ENCODE measurements at regions of chr9 and their contacts with region 1.

Region 1: GRCh38 chr9:120868676-120869359 is 8.2 kb downstream of the PHF19 start:
- DNase-seq: peak; percentile 97
- H3K4me3 Mint-ChIP-seq: peak overlapping the region; percentile 80
- H3K27ac Mint-ChIP-seq: peak overlapping the region; percentile 95
- H3K4me1 Mint-ChIP-seq: peaks cover 65% of the 10 kb centered on the region
- H3K27me3 Mint-ChIP-seq: no peaks in the 10 kb centered on the region

Region 2: DNA sequence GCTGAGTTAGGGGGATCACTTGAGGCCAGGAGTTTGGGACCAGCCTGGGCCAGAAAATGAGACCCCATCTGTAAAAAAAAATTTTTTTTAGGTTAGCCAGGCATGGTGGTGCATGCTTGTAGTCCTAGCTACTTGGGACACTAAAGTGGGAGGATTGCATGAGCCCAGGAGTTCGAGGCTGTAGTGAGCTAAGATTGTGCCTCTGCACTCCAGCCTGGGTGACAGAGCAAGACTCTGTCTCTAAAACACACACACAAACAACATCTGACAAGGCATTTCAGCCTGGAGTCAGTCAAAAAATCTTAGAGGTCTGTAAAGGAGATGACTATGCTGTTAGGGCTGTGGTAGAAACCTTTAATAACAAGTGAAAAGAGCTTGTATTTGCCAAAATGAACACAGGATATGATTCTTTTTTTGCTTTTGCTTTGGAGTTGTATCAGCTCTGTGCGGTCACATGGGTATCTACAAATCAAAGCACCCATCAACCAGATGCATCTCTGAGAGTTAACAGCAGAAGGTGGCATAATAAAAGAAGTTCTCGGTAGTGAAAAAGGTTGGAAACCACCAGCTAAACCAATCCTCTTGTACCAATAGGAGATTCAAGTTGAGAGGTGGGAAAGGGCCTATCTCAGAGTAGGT is 22.4 kb before region 1 on chr9:
- CTCF ChIA-PET with region 1: interaction called, 10 read pairs
- DNase-seq: peak; percentile 54
- H3K4me3 Mint-ChIP-seq: peak overlapping the region; percentile 9
- H3K27ac Mint-ChIP-seq: peak overlapping the region; percentile 98
- H3K4me1 Mint-ChIP-seq: peaks cover 66% of the 10 kb centered on the region
- H3K27me3 Mint-ChIP-seq: no peaks in the 10 kb centered on the region

Region 3: DNA sequence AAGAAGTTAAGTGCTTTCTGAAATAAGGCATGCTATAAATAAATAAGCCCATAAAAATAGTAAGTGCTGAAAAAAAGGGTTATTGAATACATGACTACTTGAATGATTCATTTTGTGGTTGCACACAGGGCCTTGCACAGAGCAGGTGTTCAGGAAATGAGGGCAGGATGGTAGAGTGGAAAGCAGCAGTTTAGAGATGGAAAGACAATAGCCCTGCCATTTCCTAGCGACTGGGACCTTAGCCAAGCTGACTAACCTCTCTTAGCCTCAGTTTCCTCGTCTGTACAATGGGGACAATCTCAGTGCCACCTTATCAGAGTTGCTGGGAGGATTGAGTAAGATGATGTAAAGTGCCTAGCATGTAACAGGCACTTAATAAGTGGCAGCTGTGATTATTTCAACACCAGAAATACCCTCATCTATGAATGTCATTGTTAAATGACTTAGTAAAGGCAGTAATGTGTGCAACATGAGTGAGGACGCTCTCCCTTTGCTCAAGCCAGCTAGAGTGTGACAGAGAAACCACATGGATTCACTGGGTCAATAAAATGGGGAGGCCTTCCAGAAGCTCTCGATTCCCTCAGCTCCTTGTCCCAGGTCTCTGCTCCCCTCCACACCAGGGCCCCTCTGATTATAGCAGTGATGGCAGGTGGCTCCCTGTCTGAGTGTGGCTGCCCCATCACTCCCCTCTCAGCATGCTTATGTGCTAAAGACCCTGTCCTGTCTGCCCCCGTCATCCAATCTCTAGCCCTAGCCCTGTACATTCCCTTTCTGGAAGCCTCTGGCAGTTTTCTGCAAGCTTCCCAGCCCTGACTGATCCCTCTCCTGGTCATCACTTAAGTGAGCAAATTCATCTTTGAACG is 24.2 kb after region 1 on chr9:
- CTCF ChIA-PET with region 1: interaction called, 25 read pairs
- DNase-seq: peak; percentile 74
- H3K4me3 Mint-ChIP-seq: peak overlapping the region; percentile 72
- H3K27ac Mint-ChIP-seq: peak overlapping the region; percentile 99
- H3K4me1 Mint-ChIP-seq: peaks cover 93% of the 10 kb centered on the region
- H3K27me3 Mint-ChIP-seq: no peaks in the 10 kb centered on the region

Region 4: GRCh38 chr9:120916588-120916987 is 47.8 kb after region 1 on chr9:
- CTCF ChIA-PET with region 1: interaction called, 10 read pairs
- DNase-seq: no peak
- H3K4me3 Mint-ChIP-seq: peak overlapping the region; percentile 40
- H3K27ac Mint-ChIP-seq: peak overlapping the region; percentile 91
- H3K4me1 Mint-ChIP-seq: peaks cover 83% of the 10 kb centered on the region
- H3K27me3 Mint-ChIP-seq: no peaks in the 10 kb centered on the region

Region 5: DNA sequence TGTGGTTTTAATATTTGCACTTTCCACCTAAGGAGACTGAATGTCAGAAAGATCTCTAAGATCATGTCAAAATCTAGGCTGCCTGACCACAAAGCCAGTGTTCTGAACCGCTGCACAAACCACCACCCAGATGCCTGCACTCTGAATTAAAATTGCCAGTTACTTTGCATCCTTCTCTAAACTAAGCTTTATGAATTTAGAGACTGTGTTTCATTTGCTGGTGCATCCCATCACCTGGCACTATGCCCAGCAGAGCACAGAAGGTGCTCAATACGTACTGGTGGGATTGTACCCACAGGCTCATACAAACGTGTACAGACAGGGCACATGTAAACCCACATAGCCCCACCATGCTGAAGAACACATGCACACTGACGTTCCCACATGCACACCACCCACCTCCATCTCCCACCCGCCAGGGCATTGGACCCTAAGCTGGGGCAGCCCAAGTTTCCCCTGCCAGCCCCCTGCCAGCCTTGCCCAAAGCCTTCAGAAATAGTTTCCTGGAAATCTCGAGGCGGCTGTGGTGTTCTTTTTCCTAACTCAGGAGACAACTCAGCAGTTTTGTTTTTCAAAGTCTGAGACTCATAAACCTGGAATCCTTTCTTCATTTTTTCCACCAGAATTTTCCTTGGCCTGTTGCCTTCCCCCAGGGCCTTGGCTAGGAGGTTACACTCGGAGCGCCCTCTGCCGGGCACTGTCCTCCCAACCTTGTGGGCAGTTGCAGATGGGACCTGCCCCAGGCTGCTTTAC is 67.4 kb after region 1 on chr9:
- CTCF ChIA-PET with region 1: interaction called, 83 read pairs
- DNase-seq: peak; percentile 91
- H3K4me3 Mint-ChIP-seq: peak overlapping the region; percentile 56
- H3K27ac Mint-ChIP-seq: peak overlapping the region; percentile 92
- H3K4me1 Mint-ChIP-seq: peaks cover 64% of the 10 kb centered on the region
- H3K27me3 Mint-ChIP-seq: peaks cover 6% of the 10 kb centered on the region

Measured in activated naive CD4-positive, alpha-beta T cell treated with anti-CD3 and anti-CD28 coated beads, Interleukin-2, amount 10 ng/mL, durations not matched to agents 7 days and 5 days (primary cell).